PC-9 (cell line): ENCODE measurements at regions of chr15 and their contacts with region 1.

Region 1: DNA sequence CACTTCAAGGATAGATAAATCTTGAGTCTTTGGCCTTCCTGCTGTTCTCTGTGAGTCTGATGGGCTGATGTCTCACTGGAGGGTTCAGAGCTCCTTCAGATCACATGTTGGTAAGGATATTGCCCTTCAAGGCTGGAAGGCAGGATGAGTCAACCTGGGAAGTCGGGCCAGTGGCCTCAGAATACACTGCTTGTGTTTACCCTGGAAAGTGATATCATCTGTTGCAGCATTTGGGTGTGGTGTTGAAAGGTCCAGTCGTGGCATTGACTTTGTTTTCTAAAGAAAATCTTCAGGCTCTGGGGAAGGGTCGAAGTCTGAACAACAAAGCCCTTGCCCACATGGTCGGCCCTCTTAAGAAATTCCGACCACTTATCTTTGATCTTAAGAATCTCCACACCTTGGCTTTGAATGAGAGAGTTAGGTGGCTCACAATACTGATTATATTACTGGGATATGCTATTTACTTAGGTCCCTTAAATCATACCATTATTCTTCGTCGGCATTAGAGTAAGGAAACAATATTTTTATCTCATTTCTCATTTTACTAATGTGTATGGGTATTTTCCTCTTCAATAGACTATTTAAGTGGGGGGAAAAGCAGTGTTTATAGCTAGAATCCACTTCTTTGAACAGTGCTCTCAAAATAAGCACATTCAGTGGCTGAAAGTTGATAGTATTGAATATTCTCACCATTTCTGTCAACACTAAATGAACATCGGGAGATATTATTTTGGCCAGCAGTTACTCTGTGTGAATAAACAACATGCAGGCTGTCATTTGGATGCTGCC is 303.9 kb upstream of the RASGRP1 start:
- DNase-seq: peak; percentile 72 to 80
- H3K4me3 ChIP-seq: no peak overlapping the region
- H3K27ac ChIP-seq: peak overlapping the region; percentile 40
- H3K4me1 ChIP-seq: peaks cover 7% of the 10 kb centered on the region
- H3K27me3 ChIP-seq: no peaks in the 10 kb centered on the region
- CTCF ChIP-seq: no peak

Region 2: DNA sequence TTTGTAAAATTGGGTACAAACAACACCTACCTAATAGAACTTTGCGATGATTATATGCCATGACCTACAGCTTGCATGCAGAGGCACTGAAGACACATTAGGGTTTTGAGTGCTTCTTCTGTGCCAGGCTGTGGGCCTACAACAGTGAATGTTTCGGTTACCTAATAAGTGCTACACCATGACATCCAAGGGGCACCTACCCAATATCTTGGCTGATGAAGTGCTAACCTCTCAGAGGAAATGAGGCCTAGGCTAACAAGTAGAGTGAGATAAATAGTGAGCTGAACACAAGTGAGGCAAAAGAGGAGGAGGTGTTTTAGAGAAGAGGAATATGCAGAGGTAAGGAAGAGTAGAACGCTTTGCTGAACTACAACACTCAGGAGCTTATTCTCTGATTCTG is 291.7 kb before region 1 on chr15:
- CTCF ChIA-PET with region 1: no interaction called
- POLR2A ChIA-PET with region 1: no interaction called
- intact Hi-C with region 1: no loop called
- DNase-seq: no peak
- H3K4me3 ChIP-seq: no peak overlapping the region
- H3K27ac ChIP-seq: no peak overlapping the region
- H3K4me1 ChIP-seq: no peaks in the 10 kb centered on the region
- H3K27me3 ChIP-seq: no peaks in the 10 kb centered on the region
- CTCF ChIP-seq: no peak

Region 3: DNA sequence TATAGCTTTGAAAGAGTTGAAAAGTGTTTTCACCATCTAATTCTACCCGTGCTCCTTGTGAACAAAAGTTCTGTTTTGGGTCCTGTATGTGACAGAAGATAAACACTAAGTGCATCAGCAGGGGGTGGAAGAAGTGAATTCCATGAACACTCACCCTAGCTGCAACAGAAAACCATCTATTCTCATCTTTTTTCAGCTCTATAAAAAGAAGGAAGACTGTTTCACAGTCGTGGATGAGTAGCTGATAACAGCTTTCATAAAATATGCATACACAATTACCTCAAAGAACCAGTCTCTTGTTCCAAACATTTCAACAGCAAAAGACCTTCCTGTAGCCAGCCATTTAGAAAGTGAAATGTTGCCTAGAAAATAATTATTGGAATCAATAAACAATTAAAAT is 22.2 kb before region 1 on chr15:
- CTCF ChIA-PET with region 1: no interaction called
- POLR2A ChIA-PET with region 1: interaction called, 10 read pairs
- intact Hi-C with region 1: no loop called
- DNase-seq: no peak
- H3K4me3 ChIP-seq: no peak overlapping the region
- H3K27ac ChIP-seq: no peak overlapping the region
- H3K4me1 ChIP-seq: no peaks in the 10 kb centered on the region
- H3K27me3 ChIP-seq: no peaks in the 10 kb centered on the region
- CTCF ChIP-seq: no peak

Region 4: DNA sequence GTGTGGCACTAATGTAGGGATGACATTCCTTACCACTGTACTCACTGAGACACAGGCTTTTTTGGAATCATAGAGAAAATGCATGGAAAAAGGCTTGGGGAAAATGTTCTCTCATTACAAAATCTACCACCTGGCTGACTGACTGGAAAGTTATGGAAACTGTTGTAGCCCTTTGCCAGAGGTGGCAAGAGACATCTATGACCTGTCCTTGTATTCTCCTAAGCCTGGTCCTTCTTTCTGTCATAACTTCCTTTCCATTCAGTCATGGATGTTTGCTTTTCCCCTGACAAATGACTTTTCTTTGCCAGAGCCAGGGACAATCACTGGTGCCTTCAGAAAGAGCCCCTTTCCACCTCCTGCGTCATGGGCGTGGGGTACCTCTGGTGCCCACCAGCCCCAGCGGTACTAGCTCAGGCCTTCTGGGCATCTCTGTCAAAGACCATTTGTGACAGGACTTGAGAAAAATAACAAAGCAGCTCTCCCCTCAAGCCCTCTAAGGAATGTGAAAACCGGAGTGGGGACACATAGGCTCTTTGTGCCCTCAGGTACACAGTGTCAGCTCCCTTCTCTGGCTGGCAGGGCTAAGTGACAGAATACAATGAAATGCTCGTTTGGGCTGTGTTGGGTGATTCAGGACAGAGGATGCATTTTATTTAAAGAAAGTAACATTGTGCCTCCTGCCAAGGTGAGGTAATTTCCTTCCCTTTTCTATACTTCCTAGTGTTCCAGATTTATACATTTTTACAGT is 77.2 kb after region 1 on chr15:
- CTCF ChIA-PET with region 1: no interaction called
- POLR2A ChIA-PET with region 1: no interaction called
- intact Hi-C with region 1: loop called (anchors 2 kb)
- DNase-seq: no peak
- H3K4me3 ChIP-seq: no peak overlapping the region
- H3K27ac ChIP-seq: no peak overlapping the region
- H3K4me1 ChIP-seq: peaks cover 19% of the 10 kb centered on the region
- H3K27me3 ChIP-seq: no peaks in the 10 kb centered on the region
- CTCF ChIP-seq: no peak